Tibial artery (tissue), 4 donors: ENCODE measurements at regions of chr1 and their contacts with region 1.

Region 1: DNA sequence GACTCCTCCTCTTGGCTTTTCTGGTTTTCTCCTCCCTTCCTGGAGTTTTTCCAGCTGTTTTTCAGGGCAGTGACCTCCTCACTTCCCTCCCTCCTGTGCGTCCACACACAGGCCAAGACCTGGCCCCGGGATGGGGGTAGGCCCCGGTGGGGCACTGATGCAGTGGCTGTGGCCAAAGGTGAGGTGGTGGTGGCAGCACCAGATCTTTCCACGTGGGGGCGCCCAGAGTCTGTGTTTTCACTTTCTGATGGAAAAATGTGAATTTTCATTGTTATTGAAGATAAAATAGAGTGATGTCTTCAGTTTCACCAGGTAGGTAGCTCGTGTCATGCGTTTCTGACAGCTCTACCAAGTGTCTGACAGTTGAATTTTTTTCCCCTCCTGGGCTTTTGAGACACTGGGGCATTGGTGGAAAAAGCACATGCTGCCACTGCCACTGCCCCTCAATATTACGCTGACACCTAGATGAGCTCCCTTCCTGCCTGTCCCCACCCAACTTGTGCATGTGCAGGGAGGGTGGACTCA is 39.9 kb upstream of the MAGOH start:
- DNase-seq: peak; percentile 46 to 74
- H3K4me3 ChIP-seq: no peak overlapping the region
- H3K27ac ChIP-seq: no peak overlapping the region
- H3K4me1 ChIP-seq: no peaks in the 10 kb centered on the region
- H3K27me3 ChIP-seq: no peaks in the 10 kb centered on the region
- CTCF ChIP-seq: peak; percentile 94 to 97

Region 2: DNA sequence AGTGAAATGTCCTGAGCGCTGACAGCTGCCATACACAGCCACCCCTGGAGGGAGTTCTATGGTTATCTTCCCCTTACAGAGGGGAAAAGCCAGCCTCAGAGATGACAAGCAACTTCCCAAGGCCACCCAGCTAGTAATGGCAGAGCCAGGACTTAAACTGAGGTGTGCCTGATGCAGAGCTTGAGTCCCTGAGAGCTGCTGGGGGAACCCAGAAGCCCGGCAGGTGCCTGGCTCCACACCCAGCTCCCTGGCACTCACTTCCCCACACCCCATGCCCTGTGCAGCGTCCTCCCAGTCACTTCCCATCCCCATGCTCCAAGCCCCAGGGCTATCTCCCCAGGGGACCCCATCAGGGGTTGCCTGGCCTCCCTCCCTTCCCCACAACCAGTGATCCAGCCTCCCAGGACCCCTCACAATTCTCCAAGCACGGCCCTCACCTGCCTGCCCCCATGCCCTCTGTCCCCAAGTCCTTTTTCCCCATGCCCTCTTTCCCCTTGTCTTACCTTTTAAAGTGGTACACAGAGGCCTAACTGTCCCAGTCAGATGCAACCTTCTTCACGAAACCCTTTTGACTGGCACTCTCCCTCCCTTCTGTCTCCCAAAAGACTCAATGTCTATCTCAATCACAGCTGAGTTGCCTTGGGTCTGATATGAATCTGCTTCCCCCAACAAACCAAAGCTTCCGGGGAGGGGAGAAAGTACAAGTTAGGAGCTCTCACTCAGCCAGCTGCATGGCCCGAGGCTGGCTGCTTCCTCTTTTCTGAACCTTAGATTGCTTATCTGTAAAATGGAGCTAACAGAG is 89.4 kb after region 1 on chr1:
- intact Hi-C with region 1: no loop called
- DNase-seq: peak; percentile 30 to 59
- H3K4me3 ChIP-seq: no peak overlapping the region
- H3K27ac ChIP-seq: no peak overlapping the region
- H3K4me1 ChIP-seq: no peaks in the 10 kb centered on the region
- H3K27me3 ChIP-seq: peaks cover 0 to 23% of the 10 kb centered on the region in 2 donors
- CTCF ChIP-seq: no peak

Region 3: DNA sequence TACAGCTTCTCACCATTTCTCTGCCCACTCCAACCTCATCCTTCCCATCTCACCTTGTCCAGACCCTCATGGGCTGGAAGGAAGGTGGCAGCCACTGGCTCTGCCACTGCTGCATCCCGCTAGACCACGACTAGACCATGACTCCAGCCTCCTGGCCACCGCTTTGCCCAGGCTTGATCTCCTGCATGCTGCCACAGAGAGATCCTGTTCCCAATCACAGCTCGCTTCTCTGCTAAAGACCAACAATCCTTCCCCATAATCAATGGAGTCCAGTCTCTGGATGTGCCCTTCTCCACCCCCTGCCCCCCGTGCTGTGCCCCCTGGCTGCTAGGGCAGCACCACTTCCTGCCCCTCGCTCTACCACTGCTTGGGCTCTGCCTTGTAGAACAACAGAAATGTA is 116.0 kb after region 1 on chr1:
- intact Hi-C with region 1: loop called (anchors 1 kb)
- DNase-seq: peak in 1 of 2 donors; percentile 42
- H3K4me3 ChIP-seq: no peak overlapping the region
- H3K27ac ChIP-seq: no peak overlapping the region
- H3K4me1 ChIP-seq: no peaks in the 10 kb centered on the region
- H3K27me3 ChIP-seq: peaks cover 0 to 17% of the 10 kb centered on the region in 2 donors
- CTCF ChIP-seq: no peak